ENCODE measurements at regions of chr7 and their contacts with region 1.

Region 1: DNA sequence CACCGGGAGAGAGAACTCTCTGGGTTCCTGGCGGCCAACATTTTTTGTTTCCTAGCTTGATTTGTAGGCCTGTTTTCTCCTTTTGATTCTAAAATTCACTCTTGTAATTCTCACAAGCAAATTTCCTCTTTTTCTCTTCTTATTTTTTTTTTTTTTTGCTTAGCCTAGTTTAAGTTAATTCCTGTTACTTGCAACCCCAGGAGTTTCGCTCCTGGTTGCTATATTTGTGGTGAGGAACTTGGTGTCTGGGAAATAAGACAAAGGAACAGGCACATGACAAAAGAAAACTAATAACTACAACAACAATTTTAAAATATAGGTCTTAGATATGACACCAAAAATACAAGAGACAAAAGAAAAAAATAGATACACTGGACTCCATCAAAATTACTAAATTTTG is 6.7 kb downstream of the AOAH start:
- DNase-seq: no peak
- ATAC-seq: no peak
- H3K4me3 ChIP-seq: no peak overlapping the region
- H3K4me3 Mint-ChIP-seq: no peak overlapping the region
- H3K27ac ChIP-seq: no peak overlapping the region
- H3K27ac Mint-ChIP-seq: peak overlapping the region in 1 of 2 donors; percentile 29
- H3K4me1 ChIP-seq: peaks cover 18 to 29% of the 10 kb centered on the region in 2 experiments
- H3K4me1 Mint-ChIP-seq: peaks cover 46 to 58% (median 52%) of the 10 kb centered on the region in 3 donors
- H3K27me3 ChIP-seq: no peaks in the 10 kb centered on the region
- H3K27me3 Mint-ChIP-seq: no peaks in the 10 kb centered on the region

Region 2: GRCh38 chr7:36752026-36752711 is 34.6 kb after region 1 on chr7:
- CTCF ChIA-PET with region 1: interaction called in 1 of 2 experiments, 11 read pairs
- POLR2A ChIA-PET with region 1: no interaction called
- DNase-seq: no peak
- ATAC-seq: no peak
- H3K4me3 ChIP-seq: no peak overlapping the region
- H3K4me3 Mint-ChIP-seq: no peak overlapping the region
- H3K27ac ChIP-seq: no peak overlapping the region
- H3K27ac Mint-ChIP-seq: no peak overlapping the region
- H3K4me1 ChIP-seq: peaks cover 0 to 8% of the 10 kb centered on the region in 2 experiments
- H3K4me1 Mint-ChIP-seq: peaks cover 18 to 34% (median 20%) of the 10 kb centered on the region in 3 donors
- H3K27me3 ChIP-seq: no peaks in the 10 kb centered on the region
- H3K27me3 Mint-ChIP-seq: no peaks in the 10 kb centered on the region

Measured in T-cell (primary cell).